ENCODE measurements at regions of chr1 and their contacts with region 1.

Region 1: DNA sequence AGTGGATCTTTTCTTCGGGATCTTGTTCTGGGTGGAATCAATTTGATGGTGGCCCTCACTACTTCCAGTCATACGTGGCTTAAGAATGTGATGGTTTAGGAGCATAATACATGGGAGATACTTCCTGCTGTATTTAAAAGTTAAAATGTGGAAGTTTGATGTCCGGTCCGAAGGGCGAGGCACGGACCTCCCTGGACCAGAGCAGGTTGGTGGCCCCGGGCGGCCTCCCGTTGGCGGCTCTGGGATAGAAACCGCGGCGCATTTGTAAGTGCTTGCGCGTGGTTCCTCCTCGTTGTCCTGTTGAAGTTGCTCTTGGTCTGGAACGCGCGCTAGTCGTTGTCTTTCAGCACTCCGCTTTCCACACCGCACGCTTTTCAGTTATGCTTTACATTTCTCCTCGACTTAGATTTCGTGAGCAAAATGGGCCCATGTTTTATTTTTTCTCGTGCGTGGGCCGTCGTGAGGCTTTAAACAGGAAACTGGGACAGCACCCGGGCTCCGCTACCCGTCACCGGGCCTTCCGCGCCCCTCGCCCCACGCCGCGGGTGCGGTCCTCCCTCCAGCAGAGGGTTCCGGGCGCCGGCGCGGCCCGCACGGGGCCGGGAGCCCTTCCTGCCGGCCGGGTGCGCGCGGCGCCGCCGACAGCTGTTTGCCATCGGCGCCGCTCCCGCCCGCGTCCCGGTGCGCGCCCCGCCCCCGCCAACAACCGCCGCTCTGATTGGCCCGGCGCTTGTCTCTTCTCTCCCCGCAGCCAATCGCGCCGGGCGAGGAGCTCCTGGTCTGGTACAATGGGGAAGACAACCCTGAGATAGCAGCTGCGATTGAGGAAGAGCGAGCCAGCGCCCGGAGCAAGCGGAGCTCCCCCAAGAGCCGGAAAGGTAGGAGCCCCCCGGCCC is 48.9 kb downstream of the PRDM2 start:
- DNase-seq: peak; percentile 96
- H3K4me3 ChIP-seq: peak overlapping the region; percentile 47 to 83 (median 71)
- H3K27ac ChIP-seq: peak overlapping the region; percentile 57
- H3K4me1 ChIP-seq: peaks cover 14% of the 10 kb centered on the region
- H3K27me3 ChIP-seq: no peaks in the 10 kb centered on the region
- CTCF ChIP-seq: no peak
- POLR2A ChIP-seq: peak; percentile 67

Region 2: DNA sequence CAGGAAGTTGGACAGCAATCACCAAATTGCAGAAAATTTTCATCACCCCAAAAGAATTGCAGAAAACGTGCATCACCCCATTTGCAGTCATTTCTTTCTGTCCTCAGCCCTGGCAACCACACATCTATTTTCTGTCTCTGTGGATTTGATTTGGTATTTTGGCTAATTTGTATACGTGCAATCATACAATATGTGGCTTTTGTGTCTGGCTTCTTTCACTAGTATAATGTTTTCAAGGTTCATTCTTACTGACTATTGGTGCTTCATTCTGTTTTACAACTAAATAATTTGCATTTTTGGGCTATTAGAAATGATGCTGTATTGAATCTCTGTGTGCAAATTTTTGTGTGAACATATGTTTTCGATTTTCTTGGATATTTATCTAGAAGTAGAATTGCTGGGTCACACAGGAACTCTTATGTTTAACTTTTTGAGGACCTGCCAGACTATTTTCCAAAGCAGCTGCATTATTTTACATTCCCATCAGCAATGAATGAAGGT is 73.7 kb before region 1 on chr1:
- CTCF ChIA-PET with region 1: no interaction called
- POLR2A ChIA-PET with region 1: no interaction called
- dilution Hi-C with region 1: no loop called
- intact Hi-C with region 1: no loop called
- DNase-seq: no peak
- H3K4me3 ChIP-seq: no peak overlapping the region
- H3K27ac ChIP-seq: no peak overlapping the region
- H3K4me1 ChIP-seq: no peaks in the 10 kb centered on the region
- H3K27me3 ChIP-seq: no peaks in the 10 kb centered on the region
- CTCF ChIP-seq: no peak
- POLR2A ChIP-seq: no peak

Region 3: GRCh38 chr1:13699936-13700520 is 48.8 kb before region 1 on chr1 and contains the start of gene PRDM2:
- CTCF ChIA-PET with region 1: interaction called, 3 read pairs
- POLR2A ChIA-PET with region 1: no interaction called
- dilution Hi-C with region 1: no loop called
- intact Hi-C with region 1: loop called (anchors 1 kb)
- DNase-seq: peak; percentile 57
- H3K4me3 ChIP-seq: peak within 1 kb of the TSS; percentile 59 to 89 (median 70)
- H3K27ac ChIP-seq: peak within 1 kb of the TSS; percentile 65
- H3K4me1 ChIP-seq: no peaks in the 10 kb centered on the region
- H3K27me3 ChIP-seq: peaks cover 0 to 2% of the 10 kb centered on the region in 2 experiments
- CTCF ChIP-seq: no peak
- POLR2A ChIP-seq: peak; percentile 46
- total RNA-seq, gene PRDM2: 35.7 and 36.6 TPM in 2 replicates

Region 4: GRCh38 chr1:13759088-13759487 is 10.2 kb after region 1 on chr1:
- CTCF ChIA-PET with region 1: interaction called, 12 read pairs
- POLR2A ChIA-PET with region 1: no interaction called
- dilution Hi-C with region 1: no loop called
- intact Hi-C with region 1: no loop called
- DNase-seq: no peak
- H3K4me3 ChIP-seq: no peak overlapping the region
- H3K27ac ChIP-seq: no peak overlapping the region
- H3K4me1 ChIP-seq: no peaks in the 10 kb centered on the region
- H3K27me3 ChIP-seq: no peaks in the 10 kb centered on the region
- CTCF ChIP-seq: no peak
- POLR2A ChIP-seq: no peak

Region 5: DNA sequence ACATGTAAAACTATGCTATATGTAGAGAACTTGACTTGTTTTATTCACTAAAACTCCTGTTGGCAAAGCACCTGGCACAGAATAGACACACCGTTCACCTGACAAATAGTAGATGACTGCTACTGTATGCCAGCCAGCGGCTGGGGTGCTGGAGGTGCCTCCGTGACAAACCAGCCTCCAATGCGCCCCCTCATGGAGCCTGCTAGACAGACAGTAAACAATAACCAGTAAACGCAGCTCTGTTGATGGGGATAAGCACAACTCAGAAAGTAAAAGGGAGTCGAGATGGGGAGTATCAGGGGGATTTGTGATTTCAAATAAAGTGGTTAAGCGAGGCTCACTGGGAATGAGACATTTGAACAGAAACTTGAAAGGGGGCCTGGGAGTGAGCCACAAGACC is 58.4 kb after region 1 on chr1:
- CTCF ChIA-PET with region 1: no interaction called
- POLR2A ChIA-PET with region 1: no interaction called
- dilution Hi-C with region 1: no loop called
- intact Hi-C with region 1: loop called (anchors 2 kb)
- DNase-seq: no peak
- H3K4me3 ChIP-seq: no peak overlapping the region
- H3K27ac ChIP-seq: no peak overlapping the region
- H3K4me1 ChIP-seq: no peaks in the 10 kb centered on the region
- H3K27me3 ChIP-seq: no peaks in the 10 kb centered on the region
- CTCF ChIP-seq: peak; percentile 9 to 30
- POLR2A ChIP-seq: no peak

Region 6: DNA sequence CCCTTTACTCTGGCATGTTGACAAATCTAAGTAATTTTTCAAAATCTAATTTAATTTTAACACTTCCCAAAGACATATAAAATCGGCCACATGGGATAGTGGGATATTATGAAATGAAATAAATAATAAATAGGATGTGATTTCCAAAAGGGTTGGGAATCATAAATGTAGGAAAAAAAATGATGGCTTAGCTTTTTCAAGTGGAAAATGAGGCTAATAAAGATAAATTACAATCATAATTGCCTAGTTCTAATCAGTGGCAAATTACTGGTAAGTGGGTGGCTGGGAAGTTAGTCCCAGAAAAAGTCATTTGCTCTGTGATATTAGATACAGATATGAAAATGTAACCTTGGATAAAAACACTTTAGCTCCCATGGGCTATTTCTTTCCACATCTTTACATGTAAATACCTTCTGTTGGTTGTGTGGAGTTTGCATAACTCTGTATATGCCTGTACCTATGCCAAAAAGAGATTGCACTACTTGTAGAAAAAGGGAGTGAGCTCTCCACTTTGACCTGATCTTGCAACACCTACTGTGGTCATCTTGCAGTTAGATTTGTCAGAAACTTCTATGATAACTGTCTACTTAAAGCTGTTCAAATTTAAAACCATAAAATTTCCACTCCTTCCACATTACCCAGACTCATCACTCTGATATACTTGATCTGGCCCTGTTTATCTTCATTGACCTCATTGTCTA is 565.0 kb after region 1 on chr1:
- CTCF ChIA-PET with region 1: no interaction called
- POLR2A ChIA-PET with region 1: no interaction called
- dilution Hi-C with region 1: no loop called
- intact Hi-C with region 1: no loop called
- DNase-seq: no peak
- H3K4me3 ChIP-seq: no peak overlapping the region
- H3K27ac ChIP-seq: no peak overlapping the region
- H3K4me1 ChIP-seq: no peaks in the 10 kb centered on the region
- H3K27me3 ChIP-seq: no peaks in the 10 kb centered on the region
- CTCF ChIP-seq: no peak
- POLR2A ChIP-seq: no peak